ENCODE measurements at regions of chr11 and their contacts with region 1.

Region 1: DNA sequence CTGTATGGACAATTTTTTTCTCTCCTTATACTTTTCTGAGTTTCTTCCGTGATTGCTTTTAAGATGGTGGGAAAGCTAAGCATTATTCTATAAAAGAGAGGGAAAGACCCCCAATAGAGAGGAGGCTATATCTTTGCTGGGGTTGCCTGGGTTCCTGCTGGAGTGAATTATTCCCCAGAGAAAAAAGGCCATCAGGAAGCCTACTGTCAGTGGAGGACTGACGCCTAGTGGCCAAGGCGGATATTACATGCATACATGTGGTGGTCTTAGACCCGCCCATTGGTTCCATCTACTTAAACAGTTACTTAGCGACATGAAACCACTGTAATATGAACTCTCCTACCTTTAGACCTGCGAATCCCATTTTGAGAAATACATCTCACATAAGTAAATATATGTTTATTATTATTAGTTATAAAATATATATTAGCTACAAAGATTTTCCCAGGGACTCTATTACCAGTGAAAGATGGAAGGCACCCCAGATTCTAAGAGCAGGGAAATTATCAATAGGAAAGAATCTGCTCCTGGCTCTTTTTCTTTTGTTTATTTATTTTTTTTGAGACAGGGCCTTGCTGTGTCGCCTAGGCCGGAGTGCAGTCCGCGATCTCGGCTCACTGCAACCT is 15.7 kb upstream of the PGA3 start:
- DNase-seq: peak; percentile 77
- H3K4me3 ChIP-seq: no peak overlapping the region
- H3K27ac ChIP-seq: no peak overlapping the region
- H3K4me1 ChIP-seq: no peaks in the 10 kb centered on the region
- H3K27me3 ChIP-seq: peaks cover 3% of the 10 kb centered on the region
- CTCF ChIP-seq: peak; percentile 91 to 96 (median 92)
- EP300 ChIP-seq: no peak
- POLR2A ChIP-seq: no peak

Region 2: DNA sequence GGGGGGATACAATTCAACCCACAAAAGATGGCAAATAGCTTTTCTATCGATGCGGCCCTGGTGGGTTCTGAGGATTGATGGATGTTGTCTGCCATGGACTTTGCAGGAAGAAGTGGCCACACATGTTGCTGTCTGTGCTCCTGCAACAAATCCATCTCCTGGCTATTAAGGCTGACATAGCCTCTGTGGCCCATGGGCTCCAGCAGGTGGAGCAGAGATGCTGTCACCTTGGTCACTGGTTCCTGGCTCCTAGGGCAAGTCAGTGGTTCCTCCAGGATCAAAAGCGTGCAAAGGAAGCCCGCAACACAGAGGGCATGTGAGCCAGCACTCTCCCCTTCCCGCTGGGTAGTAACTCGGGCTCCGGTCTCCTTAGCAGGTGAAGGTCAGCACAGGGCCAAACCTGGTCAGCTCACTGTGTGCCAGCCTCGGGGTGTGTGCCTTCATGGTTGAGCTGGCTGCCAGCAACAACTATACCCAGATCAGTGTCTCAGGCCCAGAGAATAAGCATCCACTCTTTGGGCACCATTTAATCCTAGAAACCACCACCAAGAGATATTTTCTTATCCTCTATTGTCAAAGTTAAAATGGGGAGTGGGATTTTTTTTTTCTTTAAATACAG is 361.9 kb before region 1 on chr11:
- in situ Hi-C with region 1: loop called in 1 of 4 experiments (anchors 25 kb)
- intact Hi-C with region 1: loop called (anchors 5 kb)
- DNase-seq: no peak
- H3K4me3 ChIP-seq: no peak overlapping the region
- H3K27ac ChIP-seq: no peak overlapping the region
- H3K4me1 ChIP-seq: peaks cover 0 to 1% (median 0%) of the 10 kb centered on the region in 4 donors
- H3K27me3 ChIP-seq: no peaks in the 10 kb centered on the region
- CTCF ChIP-seq: no peak
- EP300 ChIP-seq: no peak
- POLR2A ChIP-seq: no peak

Region 3: GRCh38 chr11:60841797-60842667 is 345.6 kb before region 1 on chr11 and contains the start of gene CCDC86:
- in situ Hi-C with region 1: loop called in 1 of 4 experiments (anchors 25 kb)
- intact Hi-C with region 1: no loop called
- DNase-seq: peak; percentile 97
- H3K4me3 ChIP-seq: peak within 1 kb of the TSS; percentile 59 to 96 (median 63)
- H3K27ac ChIP-seq: peak within 1 kb of the TSS; percentile 69 to 85 (median 80)
- H3K4me1 ChIP-seq: peaks cover 19 to 39% (median 32%) of the 10 kb centered on the region in 4 donors
- H3K27me3 ChIP-seq: no peaks in the 10 kb centered on the region
- CTCF ChIP-seq: no peak
- EP300 ChIP-seq: peak; percentile 36
- POLR2A ChIP-seq: peak; percentile 54
- total RNA-seq, gene CCDC86: 1.9 to 9.1 (median 5.5) TPM